Breast epithelium (tissue), 4 donors: ENCODE measurements at regions of chr10 and their contacts with region 1.

Region 1: DNA sequence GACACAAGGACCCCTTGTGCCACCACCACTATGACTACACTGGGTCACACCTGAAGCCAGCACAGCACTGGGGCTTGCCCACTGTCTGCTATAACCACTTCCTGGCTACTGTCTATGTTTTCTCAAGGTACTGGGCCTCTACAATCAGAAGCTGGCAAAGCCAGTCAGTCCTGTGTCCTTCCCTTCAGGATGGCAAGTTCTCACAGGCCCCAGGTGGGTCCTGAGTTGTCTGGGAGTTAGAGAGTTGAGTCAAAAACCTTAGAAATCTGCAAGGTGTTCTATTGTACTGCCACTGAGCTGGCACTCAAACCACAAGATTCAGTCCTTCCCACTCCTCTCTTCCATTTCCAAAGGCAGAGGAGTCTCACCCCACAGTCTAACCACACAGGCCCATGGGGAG is 705.5 kb downstream of the IPMK start:
- DNase-seq: no peak
- H3K4me3 ChIP-seq: no peak overlapping the region
- H3K27ac ChIP-seq: no peak overlapping the region
- H3K4me1 ChIP-seq: no peaks in the 10 kb centered on the region
- H3K27me3 ChIP-seq: no peaks in the 10 kb centered on the region
- CTCF ChIP-seq: no peak
- POLR2A ChIP-seq: no peak

Region 2: GRCh38 chr10:58137813-58138212 is 575.6 kb after region 1 on chr10:
- intact Hi-C with region 1: loop called (anchors 5 kb)
- DNase-seq: no peak
- H3K4me3 ChIP-seq: no peak overlapping the region
- H3K27ac ChIP-seq: no peak overlapping the region
- H3K4me1 ChIP-seq: no peaks in the 10 kb centered on the region
- H3K27me3 ChIP-seq: no peaks in the 10 kb centered on the region
- CTCF ChIP-seq: no peak
- POLR2A ChIP-seq: no peak